Posterior vena cava (tissue), 2 donors: ENCODE measurements at regions of chr6 and their contacts with region 1.

Region 1: GRCh38 chr6:108782179-108783041 is 65.8 kb upstream of the ARMC2 start:
- DNase-seq: peak; percentile 95

Region 2: GRCh38 chr6:108835218-108835850 is 52.9 kb after region 1 on chr6:
- intact Hi-C with region 1: loop called in 1 of 2 experiments (anchors 10 kb)
- DNase-seq: peak; percentile 96